Naive thymus-derived CD4-positive, alpha-beta T cell (primary cell): ENCODE measurements at regions of chrX and their contacts with region 1.

Region 1: DNA sequence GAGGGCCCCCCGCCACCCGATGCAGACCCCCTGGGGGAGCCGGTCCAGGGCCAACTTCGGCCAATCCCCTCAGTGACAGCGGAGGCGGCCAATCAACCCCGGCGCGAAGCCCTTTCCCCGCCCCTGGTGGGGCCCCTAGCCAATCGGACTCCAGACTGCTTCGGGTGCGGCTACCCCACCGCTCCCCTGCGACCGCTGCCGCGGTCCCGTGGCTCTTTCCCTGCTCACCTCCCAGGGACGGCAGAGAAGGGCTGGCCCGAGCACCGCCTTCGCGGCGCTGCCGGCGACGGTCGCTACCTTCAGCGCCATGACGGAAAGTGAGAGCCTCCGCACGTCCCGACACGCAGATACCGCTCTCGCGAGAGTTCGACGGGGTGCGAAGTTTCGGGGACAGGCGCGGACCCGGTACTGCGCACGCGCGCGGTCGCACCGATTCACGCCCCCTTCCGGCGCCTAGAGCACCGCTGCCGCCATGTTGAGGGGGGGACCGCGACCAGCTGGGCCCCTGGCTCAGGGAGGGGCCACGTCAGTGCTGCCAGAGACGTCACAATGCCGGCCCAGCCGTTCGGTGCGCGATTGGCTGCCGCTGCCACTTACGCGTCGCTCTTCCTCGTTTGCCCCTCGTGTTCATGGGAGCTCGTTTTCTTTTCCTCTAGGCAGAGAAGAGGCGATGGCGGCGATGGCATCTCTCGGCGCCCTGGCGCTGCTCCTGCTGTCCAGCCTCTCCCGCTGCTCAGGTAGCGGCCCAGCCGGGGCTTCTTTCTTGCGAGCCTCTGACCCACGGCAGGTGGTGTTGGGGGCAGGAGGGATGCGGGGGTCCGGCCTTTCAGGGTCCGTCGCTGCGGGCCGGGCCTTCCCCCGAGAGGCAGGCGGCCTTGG is at the starts of genes IDH3G and SSR4:
- DNase-seq: peak; percentile 83 to 96 (median 93)
- ATAC-seq: peak; percentile 97
- H3K4me3 ChIP-seq: peak within 1 kb of the TSS; percentile 75
- H3K4me3 Mint-ChIP-seq: peak within 1 kb of the TSS; percentile 86 to 95 (median 92)
- H3K27ac ChIP-seq: peak within 1 kb of the TSS; percentile 97
- H3K27ac Mint-ChIP-seq: peak within 1 kb of the TSS; percentile 86 to 95 (median 92)
- H3K4me1 ChIP-seq: peaks cover 8 to 12% of the 10 kb centered on the region in 2 donors
- H3K4me1 Mint-ChIP-seq: peaks cover 0 to 39% (median 25%) of the 10 kb centered on the region in 7 donors
- H3K27me3 ChIP-seq: no peaks in the 10 kb centered on the region
- H3K27me3 Mint-ChIP-seq: no peaks in the 10 kb centered on the region
- total RNA-seq, gene IDH3G: 44.1 to 73.1 (median 57.0) TPM
- total RNA-seq, gene SSR4: 156 to 299 (median 168) TPM

Region 2: GRCh38 chrX:153599192-153600031 is 194.8 kb before region 1 on chrX:
- CTCF ChIA-PET with region 1: no interaction called
- POLR2A ChIA-PET with region 1: no interaction called
- intact Hi-C with region 1: loop called in 1 of 2 experiments (anchors 1 kb)
- DNase-seq: peak; percentile 77 to 91 (median 82)
- ATAC-seq: peak; percentile 94
- H3K4me3 ChIP-seq: peak overlapping the region; percentile 69
- H3K4me3 Mint-ChIP-seq: peak overlapping the region; percentile 79 to 93 (median 90)
- H3K27ac ChIP-seq: peak overlapping the region; percentile 74
- H3K27ac Mint-ChIP-seq: peak overlapping the region in 7 of 9 donors; percentile 48 to 83 (median 64)
- H3K4me1 ChIP-seq: peaks cover 19 to 21% of the 10 kb centered on the region in 2 donors
- H3K4me1 Mint-ChIP-seq: peaks cover 23 to 60% (median 46%) of the 10 kb centered on the region in 7 donors
- H3K27me3 ChIP-seq: no peaks in the 10 kb centered on the region
- H3K27me3 Mint-ChIP-seq: no peaks in the 10 kb centered on the region

Region 3: GRCh38 chrX:153724252-153725040 is 69.8 kb before region 1 on chrX and contains the starts of genes ABCD1 and BCAP31:
- CTCF ChIA-PET with region 1: no interaction called
- POLR2A ChIA-PET with region 1: interaction called, 3 read pairs
- intact Hi-C with region 1: loop called (anchors 1 kb)
- DNase-seq: peak; percentile 82 to 93 (median 91)
- ATAC-seq: peak; percentile 88
- H3K4me3 ChIP-seq: peak within 1 kb of the TSS; percentile 55
- H3K4me3 Mint-ChIP-seq: peak within 1 kb of the TSS; percentile 75 to 95 (median 86)
- H3K27ac ChIP-seq: peak within 1 kb of the TSS; percentile 80
- H3K27ac Mint-ChIP-seq: peak within 1 kb of the TSS in 8 of 9 donors; percentile 55 to 87 (median 72)
- H3K4me1 ChIP-seq: peaks cover 10 to 29% of the 10 kb centered on the region in 2 donors
- H3K4me1 Mint-ChIP-seq: peaks cover 9 to 37% (median 28%) of the 10 kb centered on the region in 7 donors
- H3K27me3 ChIP-seq: no peaks in the 10 kb centered on the region
- H3K27me3 Mint-ChIP-seq: no peaks in the 10 kb centered on the region
- total RNA-seq, gene ABCD1: 6.6 to 17.6 (median 10.2) TPM
- total RNA-seq, gene BCAP31: 80.2 to 153 (median 117) TPM

Region 4: DNA sequence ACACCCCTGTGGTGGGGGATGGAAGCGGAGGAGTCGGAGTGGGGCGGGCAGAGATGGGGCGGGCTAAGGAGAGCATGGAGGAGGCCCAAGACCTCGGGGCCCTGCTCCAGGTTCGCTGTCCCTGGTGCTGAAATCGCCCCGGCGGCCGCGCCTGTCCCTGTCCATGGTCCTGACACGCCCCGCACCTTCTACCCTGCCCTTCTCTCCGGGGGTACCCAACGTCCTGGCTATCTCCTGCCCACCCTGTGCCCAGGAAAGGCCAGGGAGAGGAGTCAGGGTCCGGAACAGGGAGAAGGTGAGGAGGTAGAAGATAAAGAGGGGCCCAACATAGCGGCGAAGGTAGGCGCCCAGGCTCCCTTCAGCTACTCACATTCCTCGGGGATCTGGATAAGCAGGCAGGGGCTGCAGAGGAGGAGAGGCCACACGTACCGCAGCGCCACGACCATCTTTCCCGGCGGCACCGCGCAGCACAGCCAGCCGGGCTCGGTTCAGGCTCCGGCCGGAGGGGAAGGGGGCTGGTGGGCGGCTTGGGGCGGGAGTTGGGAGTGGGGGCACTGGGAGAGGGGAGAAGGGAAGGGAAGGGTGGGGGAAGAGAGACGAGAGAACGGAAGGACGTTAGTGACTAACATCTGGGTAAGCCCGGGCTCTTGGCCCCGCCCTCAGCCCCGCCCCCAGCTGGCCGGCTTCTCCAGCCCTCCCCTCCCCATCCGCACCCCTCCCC is 81.3 kb after region 1 on chrX:
- CTCF ChIA-PET with region 1: no interaction called
- POLR2A ChIA-PET with region 1: no interaction called
- intact Hi-C with region 1: loop called in 1 of 2 experiments (anchors 1 kb)
- DNase-seq: peak; percentile 49 to 82 (median 58)
- ATAC-seq: peak; percentile 96
- H3K4me3 ChIP-seq: no peak overlapping the region
- H3K4me3 Mint-ChIP-seq: peak overlapping the region in 2 of 10 donors; percentile 29 to 45
- H3K27ac ChIP-seq: no peak overlapping the region
- H3K27ac Mint-ChIP-seq: peak overlapping the region in 5 of 9 donors; percentile 39 to 81 (median 66)
- H3K4me1 ChIP-seq: peaks cover 0 to 4% of the 10 kb centered on the region in 2 donors
- H3K4me1 Mint-ChIP-seq: peaks cover 7 to 25% (median 20%) of the 10 kb centered on the region in 7 donors
- H3K27me3 ChIP-seq: no peaks in the 10 kb centered on the region
- H3K27me3 Mint-ChIP-seq: peaks cover 0 to 18% (median 11%) of the 10 kb centered on the region in 5 donors

Region 5: DNA sequence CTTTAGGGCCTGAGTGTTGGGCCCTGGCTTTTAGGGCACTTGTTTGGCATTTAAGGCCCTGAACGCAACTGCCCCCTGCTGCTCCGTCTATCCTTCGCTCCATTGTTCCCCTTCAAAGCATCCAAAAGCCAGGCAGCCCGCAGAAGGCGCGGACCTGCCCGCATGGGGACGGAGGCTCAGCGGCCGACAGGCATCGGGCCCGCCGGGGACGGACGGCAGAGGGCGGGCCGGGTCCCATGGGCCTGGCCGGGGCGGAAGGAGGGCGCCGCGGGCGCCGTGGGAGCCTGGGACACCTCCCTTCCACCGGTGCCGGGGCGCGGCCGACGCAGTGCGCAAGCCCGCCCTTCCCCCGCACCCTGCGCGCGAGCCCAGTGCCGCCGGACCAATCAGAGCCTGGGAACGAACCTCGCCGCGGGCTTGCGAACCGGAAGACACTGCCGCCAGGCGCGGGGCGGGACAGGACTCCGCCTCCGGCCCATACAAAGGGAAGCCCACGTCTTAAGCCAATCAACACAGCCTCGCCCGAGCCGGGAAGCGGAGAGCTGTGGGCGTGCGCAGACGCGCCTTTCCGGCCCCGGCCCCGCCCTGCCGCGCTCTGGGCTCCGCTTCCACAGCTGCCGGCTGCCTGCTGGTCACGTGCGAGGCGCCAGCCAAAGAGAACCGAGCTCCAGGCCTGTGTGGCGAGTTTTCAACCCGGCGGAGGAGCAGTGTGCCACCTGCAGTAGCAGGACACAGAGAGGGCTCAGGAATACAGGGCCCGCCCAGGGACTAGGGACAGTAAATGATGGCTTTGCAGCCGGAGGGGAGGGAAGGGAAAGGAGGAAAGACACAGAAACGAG is 133.9 kb after region 1 on chrX:
- CTCF ChIA-PET with region 1: no interaction called
- POLR2A ChIA-PET with region 1: interaction called, 30 read pairs
- intact Hi-C with region 1: loop called (anchors 1 kb)
- DNase-seq: peak; percentile 80 to 98 (median 94)
- ATAC-seq: peak; percentile 86
- H3K4me3 ChIP-seq: peak overlapping the region; percentile 81
- H3K4me3 Mint-ChIP-seq: peak overlapping the region; percentile 90 to 98 (median 94)
- H3K27ac ChIP-seq: peak overlapping the region; percentile 98
- H3K27ac Mint-ChIP-seq: peak overlapping the region; percentile 80 to 100 (median 98)
- H3K4me1 ChIP-seq: peaks cover 14 to 18% of the 10 kb centered on the region in 2 donors
- H3K4me1 Mint-ChIP-seq: peaks cover 0 to 68% (median 21%) of the 10 kb centered on the region in 7 donors
- H3K27me3 ChIP-seq: no peaks in the 10 kb centered on the region
- H3K27me3 Mint-ChIP-seq: no peaks in the 10 kb centered on the region

Region 6: DNA sequence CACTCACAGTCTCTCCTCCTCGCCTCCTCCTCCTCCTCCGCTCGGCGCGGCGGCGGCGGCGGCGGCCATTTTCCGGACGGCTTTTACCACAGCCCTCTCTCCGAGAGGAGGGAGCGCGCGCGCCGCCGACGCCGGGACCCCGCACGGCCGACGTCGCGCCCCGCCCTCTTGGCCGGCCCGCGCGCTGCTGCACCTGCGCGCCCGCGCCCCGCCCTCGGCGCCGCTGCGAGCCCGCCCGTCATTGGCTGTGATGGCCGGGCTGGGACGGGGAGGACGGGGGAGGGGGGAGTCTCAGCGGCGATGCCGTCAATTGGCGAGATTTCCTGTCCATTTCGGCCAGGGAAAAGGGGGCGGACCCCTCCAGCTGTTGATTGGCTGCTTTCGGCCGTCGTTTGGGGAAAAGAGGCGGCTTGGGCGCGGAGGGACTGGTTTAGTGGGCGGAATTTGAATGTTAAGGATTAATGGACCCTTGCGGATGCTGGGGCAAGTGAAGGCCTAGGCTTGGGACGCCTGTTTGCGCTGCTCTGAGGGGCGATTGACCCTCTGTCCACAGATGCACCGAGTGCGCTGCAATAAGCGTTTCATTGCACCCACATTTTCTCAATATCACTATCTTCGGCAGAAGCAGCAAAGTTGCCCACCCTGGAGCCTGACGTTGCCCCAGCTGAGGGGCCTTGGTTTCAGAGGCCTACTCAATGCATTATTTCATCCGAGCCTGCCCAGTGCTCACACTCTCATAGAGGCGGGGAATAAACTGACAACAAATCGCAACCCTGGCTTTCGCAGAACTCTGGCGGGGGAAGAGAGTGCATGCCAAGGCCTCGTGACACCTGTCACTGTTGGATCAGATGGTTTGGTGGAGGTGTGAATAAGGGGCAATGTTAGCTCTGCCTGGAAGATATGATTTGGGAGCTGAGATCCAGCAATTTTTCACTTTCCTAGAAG is 303.6 kb after region 1 on chrX and contains the start of gene MECP2:
- CTCF ChIA-PET with region 1: no interaction called
- POLR2A ChIA-PET with region 1: no interaction called
- intact Hi-C with region 1: loop called in 1 of 2 experiments (anchors 1 kb)
- DNase-seq: peak; percentile 78 to 88 (median 86)
- ATAC-seq: peak; percentile 94
- H3K4me3 ChIP-seq: peak within 1 kb of the TSS; percentile 84
- H3K4me3 Mint-ChIP-seq: peak within 1 kb of the TSS; percentile 89 to 99 (median 96)
- H3K27ac ChIP-seq: peak within 1 kb of the TSS; percentile 84
- H3K27ac Mint-ChIP-seq: peak within 1 kb of the TSS; percentile 90 to 97 (median 94)
- H3K4me1 ChIP-seq: peaks cover 17 to 26% of the 10 kb centered on the region in 2 donors
- H3K4me1 Mint-ChIP-seq: peaks cover 14 to 51% (median 36%) of the 10 kb centered on the region in 7 donors
- H3K27me3 ChIP-seq: no peaks in the 10 kb centered on the region
- H3K27me3 Mint-ChIP-seq: peaks cover 0 to 4% (median 0%) of the 10 kb centered on the region in 5 donors
- total RNA-seq, gene MECP2: 72.7 to 155 (median 103) TPM

Region 7: GRCh38 chrX:154547245-154548027 is 753.2 kb after region 1 on chrX and contains the start of gene IKBKG:
- CTCF ChIA-PET with region 1: no interaction called
- POLR2A ChIA-PET with region 1: no interaction called
- intact Hi-C with region 1: loop called in 1 of 2 experiments (anchors 1 kb)
- DNase-seq: peak; percentile 83 to 92 (median 91)
- ATAC-seq: peak; percentile 89
- H3K4me3 ChIP-seq: peak within 1 kb of the TSS; percentile 75
- H3K4me3 Mint-ChIP-seq: peak within 1 kb of the TSS; percentile 84 to 98 (median 90)
- H3K27ac ChIP-seq: peak within 1 kb of the TSS; percentile 93
- H3K27ac Mint-ChIP-seq: peak within 1 kb of the TSS; percentile 88 to 97 (median 93)
- H3K4me1 ChIP-seq: peaks cover 25 to 44% of the 10 kb centered on the region in 2 donors
- H3K4me1 Mint-ChIP-seq: peaks cover 24 to 58% (median 42%) of the 10 kb centered on the region in 7 donors
- H3K27me3 ChIP-seq: no peaks in the 10 kb centered on the region
- H3K27me3 Mint-ChIP-seq: no peaks in the 10 kb centered on the region
- total RNA-seq, gene IKBKG: 29.6 to 45.5 (median 38.8) TPM